ENCODE measurements at regions of chr5 and their contacts with region 1.

Region 1: GRCh38 chr5:81425569-81425968 is 31.6 kb upstream of the ACOT12 start:
- DNase-seq: peak; percentile 65
- H3K4me3 ChIP-seq: no peak overlapping the region
- H3K27ac ChIP-seq: no peak overlapping the region
- H3K4me1 ChIP-seq: peaks cover 36% of the 10 kb centered on the region
- H3K27me3 ChIP-seq: no peaks in the 10 kb centered on the region
- CTCF ChIP-seq: peak; percentile 26 to 32
- POLR2A ChIP-seq: no peak

Region 2: DNA sequence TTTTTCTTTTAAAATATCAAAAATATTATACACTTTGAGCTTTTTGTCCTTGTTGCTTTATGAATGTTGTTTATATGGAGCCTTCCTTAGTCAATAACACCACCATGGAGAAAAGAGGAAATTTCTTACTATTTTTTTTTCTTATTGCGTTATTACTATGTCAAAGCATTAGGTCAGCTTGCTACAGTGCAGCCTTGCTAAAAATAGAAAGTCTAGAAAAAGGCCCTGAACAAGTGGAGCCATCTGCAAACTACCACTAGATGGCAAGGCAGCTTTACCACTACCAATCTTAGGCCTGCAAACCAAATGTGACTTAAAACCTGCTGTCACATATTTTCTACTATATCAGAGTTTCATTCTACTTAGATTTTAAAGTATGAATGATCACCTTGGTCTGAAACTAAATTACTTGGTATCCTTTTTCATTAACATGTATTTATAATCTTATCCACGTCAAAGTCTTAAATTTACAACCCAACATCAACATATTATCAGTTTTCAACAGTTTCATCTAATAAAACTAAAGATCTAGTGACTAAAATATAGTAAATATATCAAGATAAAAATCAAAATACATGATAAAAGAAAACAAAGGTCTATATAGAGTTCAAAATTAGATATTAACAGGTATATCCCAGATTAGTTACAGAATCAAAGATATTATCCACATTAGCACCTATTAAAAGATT is 81.5 kb after region 1 on chr5:
- CTCF ChIA-PET with region 1: interaction called, 17 read pairs
- POLR2A ChIA-PET with region 1: no interaction called
- dilution Hi-C with region 1: no loop called
- intact Hi-C with region 1: loop called (anchors 1 kb)
- DNase-seq: peak; percentile 94
- H3K4me3 ChIP-seq: no peak overlapping the region
- H3K27ac ChIP-seq: no peak overlapping the region
- H3K4me1 ChIP-seq: peaks cover 14% of the 10 kb centered on the region
- H3K27me3 ChIP-seq: no peaks in the 10 kb centered on the region
- CTCF ChIP-seq: peak; percentile 78
- POLR2A ChIP-seq: no peak

Region 3: GRCh38 chr5:81787474-81788242 is 362.1 kb after region 1 on chr5:
- CTCF ChIA-PET with region 1: interaction called, 3 read pairs
- POLR2A ChIA-PET with region 1: no interaction called
- dilution Hi-C with region 1: no loop called
- intact Hi-C with region 1: loop called (anchors 1 kb)
- DNase-seq: peak; percentile 77
- H3K4me3 ChIP-seq: no peak overlapping the region
- H3K27ac ChIP-seq: no peak overlapping the region
- H3K4me1 ChIP-seq: no peaks in the 10 kb centered on the region
- H3K27me3 ChIP-seq: no peaks in the 10 kb centered on the region
- CTCF ChIP-seq: no peak
- POLR2A ChIP-seq: no peak

Region 4: GRCh38 chr5:81851481-81852178 is 426.1 kb after region 1 on chr5:
- CTCF ChIA-PET with region 1: interaction called, 25 read pairs
- POLR2A ChIA-PET with region 1: no interaction called
- dilution Hi-C with region 1: no loop called
- intact Hi-C with region 1: loop called (anchors 1 kb)
- DNase-seq: peak; percentile 94
- H3K4me3 ChIP-seq: peak overlapping the region in 2 of 3 experiments; percentile 40 to 54
- H3K27ac ChIP-seq: peak overlapping the region; percentile 65
- H3K4me1 ChIP-seq: peaks cover 10% of the 10 kb centered on the region
- H3K27me3 ChIP-seq: no peaks in the 10 kb centered on the region
- CTCF ChIP-seq: no peak
- POLR2A ChIP-seq: peak; percentile 88

Region 5: GRCh38 chr5:82165740-82166530 is 740.4 kb after region 1 on chr5:
- CTCF ChIA-PET with region 1: interaction called, 83 read pairs
- POLR2A ChIA-PET with region 1: no interaction called
- dilution Hi-C with region 1: no loop called
- intact Hi-C with region 1: loop called (anchors 1 kb)
- DNase-seq: peak; percentile 86
- H3K4me3 ChIP-seq: no peak overlapping the region
- H3K27ac ChIP-seq: peak overlapping the region; percentile 17
- H3K4me1 ChIP-seq: peaks cover 26% of the 10 kb centered on the region
- H3K27me3 ChIP-seq: no peaks in the 10 kb centered on the region
- CTCF ChIP-seq: peak; percentile 60 to 64
- POLR2A ChIP-seq: no peak

Region 6: GRCh38 chr5:82265047-82265446 is 839.5 kb after region 1 on chr5:
- CTCF ChIA-PET with region 1: interaction called, 3 read pairs
- POLR2A ChIA-PET with region 1: no interaction called
- dilution Hi-C with region 1: no loop called
- intact Hi-C with region 1: loop called (anchors 10 kb)
- DNase-seq: no peak
- H3K4me3 ChIP-seq: no peak overlapping the region
- H3K27ac ChIP-seq: no peak overlapping the region
- H3K4me1 ChIP-seq: peaks cover 9% of the 10 kb centered on the region
- H3K27me3 ChIP-seq: no peaks in the 10 kb centered on the region
- CTCF ChIP-seq: no peak
- POLR2A ChIP-seq: no peak